Posterior vena cava (tissue), 2 donors: ENCODE measurements at regions of chr3 and their contacts with region 1.

Region 1: GRCh38 chr3:50227390-50228183 is 8.4 kb upstream of the GNAI2 start:
- DNase-seq: peak; percentile 97

Region 2: GRCh38 chr3:50192689-50193141 is 34.9 kb before region 1 on chr3:
- intact Hi-C with region 1: loop called (anchors 2 kb)
- DNase-seq: peak; percentile 92

Region 3: DNA sequence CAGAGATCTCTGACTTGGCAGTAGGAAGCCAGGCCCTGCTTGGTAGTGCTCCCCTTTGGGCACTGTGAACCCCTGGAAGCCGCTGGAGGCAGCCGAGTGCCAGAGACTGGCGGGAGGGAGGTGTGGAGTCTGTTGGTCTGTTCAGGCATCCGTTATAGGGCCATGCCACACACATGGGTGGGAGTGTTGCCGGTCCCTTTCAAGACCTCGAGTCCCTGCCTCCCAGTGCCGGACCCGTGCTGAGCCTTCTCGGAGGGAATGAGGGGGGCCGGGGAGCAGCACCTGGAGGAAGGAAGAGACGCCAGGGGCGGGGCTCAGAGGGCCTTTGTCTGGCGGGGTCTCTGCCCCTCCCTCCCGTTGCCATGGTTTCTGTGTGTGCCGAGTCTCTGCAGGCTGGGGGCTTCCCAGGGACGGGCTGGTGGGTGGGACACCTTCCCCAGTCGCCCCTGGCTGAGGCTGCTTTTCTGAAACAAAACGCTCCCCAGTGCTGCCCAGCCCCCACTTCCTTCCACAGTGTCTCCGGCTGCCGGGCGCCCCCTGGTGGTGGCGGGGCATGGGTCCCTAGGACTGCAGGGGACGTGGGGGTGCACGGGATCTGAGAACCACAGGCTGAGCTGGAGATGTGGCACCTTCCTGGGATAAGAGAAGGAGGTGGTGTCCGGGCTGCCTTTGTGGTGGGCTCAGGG is 18.4 kb after region 1 on chr3:
- intact Hi-C with region 1: loop called in 1 of 2 experiments (anchors 2 kb)
- DNase-seq: peak; percentile 98